Activated CD4-positive, alpha-beta T cell treated with anti-CD3 and anti-CD28 coated beads, Interleukin-2, amount 10 ng/mL, durations not matched to agents 24 days and 14 days (primary cell): ENCODE measurements at regions of chr14 and their contacts with region 1.

Region 1: GRCh38 chr14:55386031-55386808 is 25.4 kb downstream of the ATG14 start:
- DNase-seq: peak; percentile 73
- H3K4me3 Mint-ChIP-seq: peak overlapping the region; percentile 65
- H3K27ac Mint-ChIP-seq: peak overlapping the region; percentile 97
- H3K4me1 Mint-ChIP-seq: peaks cover 52% of the 10 kb centered on the region
- H3K27me3 Mint-ChIP-seq: no peaks in the 10 kb centered on the region

Region 2: GRCh38 chr14:55170526-55170925 is 215.7 kb before region 1 on chr14:
- intact Hi-C with region 1: no loop called
- DNase-seq: no peak
- H3K4me3 Mint-ChIP-seq: no peak overlapping the region
- H3K27ac Mint-ChIP-seq: no peak overlapping the region
- H3K4me1 Mint-ChIP-seq: no peaks in the 10 kb centered on the region
- H3K27me3 Mint-ChIP-seq: no peaks in the 10 kb centered on the region

Region 3: GRCh38 chr14:55339770-55340169 is 46.5 kb before region 1 on chr14:
- intact Hi-C with region 1: loop called (anchors 2 kb)
- DNase-seq: peak; percentile 71
- H3K4me3 Mint-ChIP-seq: peak overlapping the region; percentile 47
- H3K27ac Mint-ChIP-seq: peak overlapping the region; percentile 84
- H3K4me1 Mint-ChIP-seq: peaks cover 60% of the 10 kb centered on the region
- H3K27me3 Mint-ChIP-seq: no peaks in the 10 kb centered on the region

Region 4: DNA sequence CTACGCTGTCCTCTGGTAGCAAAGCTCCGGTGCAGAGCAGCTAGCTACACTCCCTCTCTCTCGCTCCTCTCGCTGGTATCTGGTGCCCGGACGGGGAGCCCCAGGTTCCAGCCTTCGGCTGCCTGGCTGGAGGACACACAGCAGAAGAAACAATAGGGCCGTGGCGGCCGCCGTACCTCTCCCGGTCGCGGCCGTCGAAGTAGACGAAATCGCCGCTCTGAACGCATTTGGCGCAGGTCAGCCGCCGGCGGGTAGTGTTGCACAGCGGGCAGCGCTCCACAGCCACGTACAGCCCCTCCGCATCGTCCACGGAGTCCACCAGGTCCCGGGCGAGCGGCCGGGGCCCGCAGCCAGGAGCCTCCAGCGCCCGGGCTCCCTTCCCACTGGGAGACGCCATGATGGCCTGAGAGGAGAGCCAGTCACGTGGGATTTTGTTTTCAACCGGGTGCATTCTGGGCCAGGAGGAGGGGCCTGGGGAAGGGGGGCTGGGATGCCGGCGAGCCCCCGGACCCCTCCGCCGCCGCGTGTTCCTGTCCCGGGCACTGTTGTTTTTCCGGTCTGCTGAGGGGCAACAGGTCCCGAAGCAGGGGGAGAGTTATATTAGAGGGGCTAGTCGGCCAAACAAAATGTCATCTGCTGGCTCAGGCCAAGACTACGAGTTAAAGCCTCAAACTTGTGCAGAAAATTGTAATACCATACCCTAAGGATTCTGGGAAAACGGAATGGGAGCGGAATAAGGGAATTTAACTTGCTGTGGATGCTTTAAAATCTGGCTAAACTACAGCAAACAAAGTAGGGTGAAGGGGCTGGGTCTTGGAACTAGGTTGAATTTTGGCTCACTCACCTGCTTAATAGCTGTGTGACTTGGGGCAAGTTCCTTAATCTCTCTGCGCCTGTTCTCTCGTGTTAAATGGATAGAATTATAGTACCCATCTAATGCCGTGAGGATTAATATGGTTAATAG is 25.5 kb after region 1 on chr14 and contains the start of gene ATG14:
- intact Hi-C with region 1: loop called (anchors 1 kb)
- DNase-seq: peak; percentile 93
- H3K4me3 Mint-ChIP-seq: peak within 1 kb of the TSS; percentile 91
- H3K27ac Mint-ChIP-seq: peak within 1 kb of the TSS; percentile 92
- H3K4me1 Mint-ChIP-seq: peaks cover 26% of the 10 kb centered on the region
- H3K27me3 Mint-ChIP-seq: peaks cover 4% of the 10 kb centered on the region
- total RNA-seq, gene ATG14: 4.9 and 5.8 TPM in 2 replicates

Region 5: GRCh38 chr14:55430024-55430690 is 43.9 kb after region 1 on chr14:
- intact Hi-C with region 1: loop called (anchors 1 kb)
- DNase-seq: peak; percentile 86
- H3K4me3 Mint-ChIP-seq: no peak overlapping the region
- H3K27ac Mint-ChIP-seq: no peak overlapping the region
- H3K4me1 Mint-ChIP-seq: peaks cover 24% of the 10 kb centered on the region
- H3K27me3 Mint-ChIP-seq: no peaks in the 10 kb centered on the region